ENCODE measurements at regions of chr13 and their contacts with region 1.

Region 1: DNA sequence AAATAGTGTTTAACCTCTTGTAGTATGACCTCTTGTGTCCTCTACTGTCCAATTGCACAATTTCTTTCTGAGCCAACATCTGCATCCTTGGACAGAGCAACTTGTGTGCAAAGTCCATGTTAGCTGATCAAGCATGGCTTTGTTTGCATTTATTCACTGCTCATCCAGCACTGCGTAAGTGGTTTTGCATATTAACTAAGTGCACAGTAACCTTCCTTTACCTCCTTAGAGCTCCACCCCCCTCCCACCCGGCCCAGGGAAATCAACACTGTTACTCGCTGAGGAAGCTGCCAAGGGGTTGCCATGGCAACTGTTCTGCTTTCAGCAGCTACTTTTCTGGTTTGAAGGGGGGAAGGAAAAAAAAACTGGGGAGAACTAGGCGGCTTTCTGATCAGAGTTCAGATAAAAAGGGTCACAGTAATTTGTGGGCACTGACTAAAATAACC is 153.5 kb upstream of the KLF12 start:
- DNase-seq: no peak
- ATAC-seq: no peak
- H3K4me3 ChIP-seq: no peak overlapping the region
- H3K27ac ChIP-seq: no peak overlapping the region
- H3K4me1 ChIP-seq: peaks cover 0 to 3% of the 10 kb centered on the region in 2 experiments; a peak in 1 of 4 replicates
- H3K27me3 ChIP-seq: no peaks in the 10 kb centered on the region
- CTCF ChIP-seq: no peak
- POLR2A ChIP-seq: no peak
- RAD21 ChIP-seq: no peak

Region 2: GRCh38 chr13:73754727-73755292 is 532.9 kb before region 1 on chr13:
- CTCF ChIA-PET with region 1: interaction called, 5 read pairs
- POLR2A ChIA-PET with region 1: no interaction called
- RAD21 ChIA-PET with region 1: interaction called in 1 of 2 experiments, 5 read pairs
- intact Hi-C with region 1: loop called (anchors 1 kb)
- DNase-seq: peak; percentile 40
- ATAC-seq: peak; percentile 81
- H3K4me3 ChIP-seq: no peak overlapping the region
- H3K27ac ChIP-seq: no peak overlapping the region
- H3K4me1 ChIP-seq: no peaks in the 10 kb centered on the region
- H3K27me3 ChIP-seq: no peaks in the 10 kb centered on the region
- CTCF ChIP-seq: peak; percentile 38 to 68 (median 53); a peak in 5 of 6 replicates
- POLR2A ChIP-seq: no peak
- RAD21 ChIP-seq: peak; percentile 73

Region 3: DNA sequence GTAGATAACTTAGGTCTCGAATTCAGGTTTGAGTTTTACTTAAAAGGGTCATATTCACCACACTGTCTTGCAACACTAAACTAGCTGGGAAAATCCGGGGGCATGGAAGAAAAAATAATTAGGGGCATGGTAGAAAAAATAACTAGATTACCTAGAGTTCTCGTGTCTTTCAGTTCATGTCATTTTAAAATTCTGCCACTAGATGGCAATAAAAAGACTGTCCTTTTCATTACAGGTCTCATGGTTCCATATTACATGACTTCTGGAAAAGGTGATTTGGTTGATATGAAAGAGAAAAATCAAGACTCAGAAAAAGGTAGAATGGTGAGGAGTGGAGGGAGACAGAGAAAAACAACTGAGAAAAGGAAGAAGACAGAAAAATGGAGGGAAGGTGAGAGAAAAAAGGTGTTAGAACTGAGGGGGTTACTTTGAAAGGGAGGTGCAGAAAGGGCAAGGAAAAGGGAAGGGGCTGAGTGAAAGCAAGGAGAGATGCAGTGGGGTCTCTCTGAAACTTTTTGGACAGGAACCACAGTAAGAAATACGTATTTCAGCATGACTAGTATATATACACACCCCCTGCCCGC is 452.5 kb before region 1 on chr13:
- CTCF ChIA-PET with region 1: interaction called, 6 read pairs
- POLR2A ChIA-PET with region 1: no interaction called
- RAD21 ChIA-PET with region 1: no interaction called
- intact Hi-C with region 1: loop called (anchors 1 kb)
- DNase-seq: peak; percentile 22
- ATAC-seq: peak; percentile 69
- H3K4me3 ChIP-seq: no peak overlapping the region
- H3K27ac ChIP-seq: no peak overlapping the region
- H3K4me1 ChIP-seq: no peaks in the 10 kb centered on the region
- H3K27me3 ChIP-seq: no peaks in the 10 kb centered on the region
- CTCF ChIP-seq: peak; percentile 46 to 67 (median 47); a peak in 5 of 6 replicates
- POLR2A ChIP-seq: no peak
- RAD21 ChIP-seq: peak; percentile 65

Measured in HCT116 (cell line).